ENCODE measurements at regions of chr3 and their contacts with region 1.

Region 1: GRCh38 chr3:32143849-32144757 is 37.7 kb downstream of the GPD1L start:
- DNase-seq: peak; percentile 51 to 80 (median 68)
- H3K4me3 ChIP-seq: no peak overlapping the region
- H3K27ac ChIP-seq: no peak overlapping the region
- H3K4me1 ChIP-seq: no peaks in the 10 kb centered on the region
- H3K27me3 ChIP-seq: no peaks in the 10 kb centered on the region
- CTCF ChIP-seq: peak; percentile 75 to 89 (median 81)
- POLR2A ChIP-seq: no peak

Region 2: DNA sequence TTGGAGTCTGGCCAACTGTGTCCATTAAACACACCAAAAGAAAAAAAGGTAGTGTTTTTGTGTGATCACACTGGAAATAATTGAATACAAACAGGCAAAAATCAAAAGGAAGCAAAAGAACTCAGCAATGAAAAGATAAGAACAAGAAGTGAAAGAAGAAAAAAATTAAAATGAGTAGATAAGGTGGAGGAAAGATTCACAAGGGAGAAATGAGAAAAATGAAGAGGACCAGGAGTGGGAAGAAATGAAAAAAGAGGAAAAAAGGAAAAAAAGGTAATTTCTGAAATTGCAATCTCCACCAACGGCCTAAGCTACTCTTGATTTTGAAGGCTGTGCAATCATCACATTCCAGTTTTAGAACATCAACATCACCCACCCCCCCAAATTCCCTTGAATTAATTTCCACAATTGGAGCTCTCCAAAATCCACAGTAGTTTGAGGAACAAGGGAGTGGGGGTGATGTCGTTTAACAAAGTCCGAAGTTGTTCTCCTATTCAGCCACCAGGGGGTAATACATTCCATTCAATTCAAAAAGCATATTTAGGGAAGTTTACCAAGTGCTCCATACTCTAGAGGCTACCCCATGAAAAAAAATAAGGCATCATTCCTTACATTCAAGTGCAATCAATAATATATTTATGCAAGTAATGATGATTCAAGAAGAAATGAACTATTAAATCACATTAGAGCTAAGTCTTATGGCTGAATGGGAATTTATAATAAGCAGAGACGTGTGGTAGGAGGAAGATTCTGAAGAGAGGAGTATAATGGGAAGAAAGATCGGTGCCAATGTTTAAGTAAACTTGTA is 125.1 kb before region 1 on chr3:
- intact Hi-C with region 1: loop called (anchors 5 kb)
- DNase-seq: peak in 1 of 7 donors; percentile 13
- H3K4me3 ChIP-seq: no peak overlapping the region
- H3K27ac ChIP-seq: no peak overlapping the region
- H3K4me1 ChIP-seq: no peaks in the 10 kb centered on the region
- H3K27me3 ChIP-seq: no peaks in the 10 kb centered on the region
- CTCF ChIP-seq: peak; percentile 69 to 90 (median 82)
- POLR2A ChIP-seq: no peak

Region 3: DNA sequence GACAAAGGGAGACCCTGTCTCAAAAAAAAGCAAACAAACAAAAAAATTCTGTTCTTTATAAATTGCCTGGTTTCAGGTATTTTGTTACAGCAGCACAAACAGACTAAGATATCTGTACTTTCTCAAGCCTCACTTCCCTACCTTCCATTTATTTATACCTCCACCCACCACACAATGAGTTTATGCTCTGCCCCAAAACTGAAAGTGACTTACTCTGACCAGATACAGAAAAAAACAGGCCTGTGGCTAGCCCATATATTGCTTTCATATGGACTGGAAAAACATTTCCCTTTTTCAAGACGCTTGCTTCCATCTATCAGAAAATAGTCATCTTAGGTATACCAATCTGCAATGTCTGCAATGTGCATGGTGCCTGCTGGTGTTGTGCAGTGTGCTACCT is 46.3 kb before region 1 on chr3:
- intact Hi-C with region 1: no loop called
- DNase-seq: no peak
- H3K4me3 ChIP-seq: no peak overlapping the region
- H3K27ac ChIP-seq: no peak overlapping the region
- H3K4me1 ChIP-seq: no peaks in the 10 kb centered on the region
- H3K27me3 ChIP-seq: no peaks in the 10 kb centered on the region
- CTCF ChIP-seq: no peak
- POLR2A ChIP-seq: no peak

Region 4: GRCh38 chr3:32274306-32274705 is 130.2 kb after region 1 on chr3:
- intact Hi-C with region 1: no loop called
- DNase-seq: no peak
- H3K4me3 ChIP-seq: no peak overlapping the region
- H3K27ac ChIP-seq: no peak overlapping the region
- H3K4me1 ChIP-seq: peaks cover 0 to 6% of the 10 kb centered on the region in 2 donors
- H3K27me3 ChIP-seq: no peaks in the 10 kb centered on the region
- CTCF ChIP-seq: no peak
- POLR2A ChIP-seq: no peak